ENCODE measurements at regions of chr20 and their contacts with region 1.

Region 1: GRCh38 chr20:63864847-63865640 is at the start of gene TPD52L2:
- DNase-seq: peak; percentile 98
- ATAC-seq: peak; percentile 82
- H3K4me3 ChIP-seq: peak within 1 kb of the TSS; percentile 69 to 97 (median 86)
- H3K4me3 Mint-ChIP-seq: peak within 1 kb of the TSS; percentile 94
- H3K27ac ChIP-seq: peak within 1 kb of the TSS; percentile 89 to 90
- H3K27ac Mint-ChIP-seq: peak within 1 kb of the TSS; percentile 97
- H3K4me1 ChIP-seq: peaks cover 16 to 20% of the 10 kb centered on the region in 2 donors
- H3K4me1 Mint-ChIP-seq: peaks cover 23% of the 10 kb centered on the region
- H3K27me3 ChIP-seq: no peaks in the 10 kb centered on the region
- H3K27me3 Mint-ChIP-seq: no peaks in the 10 kb centered on the region
- CTCF ChIP-seq: no peak
- total RNA-seq, gene TPD52L2: 41.1 and 41.3 TPM in 2 replicates

Region 2: GRCh38 chr20:63520504-63520933 is 344.5 kb before region 1 on chr20 and contains the start of gene PPDPF:
- CTCF ChIA-PET with region 1: no interaction called
- POLR2A ChIA-PET with region 1: interaction called, 4 read pairs
- intact Hi-C with region 1: loop called (anchors 1 kb)
- DNase-seq: peak; percentile 92
- ATAC-seq: peak; percentile 81
- H3K4me3 ChIP-seq: peak within 1 kb of the TSS; percentile 21 to 79 (median 74)
- H3K4me3 Mint-ChIP-seq: peak within 1 kb of the TSS; percentile 86
- H3K27ac ChIP-seq: peak within 1 kb of the TSS; percentile 63 to 76
- H3K27ac Mint-ChIP-seq: peak within 1 kb of the TSS; percentile 90
- H3K4me1 ChIP-seq: peaks cover 16 to 23% of the 10 kb centered on the region in 2 donors
- H3K4me1 Mint-ChIP-seq: peaks cover 31% of the 10 kb centered on the region
- H3K27me3 ChIP-seq: peaks cover 0 to 10% (median 3%) of the 10 kb centered on the region in 4 experiments
- H3K27me3 Mint-ChIP-seq: peaks cover 4% of the 10 kb centered on the region
- CTCF ChIP-seq: no peak
- total RNA-seq, gene PPDPF: 149 and 162 TPM in 2 replicates

Region 3: GRCh38 chr20:63622096-63622495 is 242.9 kb before region 1 on chr20:
- CTCF ChIA-PET with region 1: interaction called, 3 read pairs
- POLR2A ChIA-PET with region 1: interaction called, 12 read pairs
- intact Hi-C with region 1: no loop called
- DNase-seq: no peak
- ATAC-seq: no peak
- H3K4me3 ChIP-seq: no peak overlapping the region
- H3K4me3 Mint-ChIP-seq: no peak overlapping the region
- H3K27ac ChIP-seq: no peak overlapping the region
- H3K27ac Mint-ChIP-seq: no peak overlapping the region
- H3K4me1 ChIP-seq: peaks cover 3 to 13% of the 10 kb centered on the region in 2 donors
- H3K4me1 Mint-ChIP-seq: peaks cover 14% of the 10 kb centered on the region
- H3K27me3 ChIP-seq: no peaks in the 10 kb centered on the region
- H3K27me3 Mint-ChIP-seq: no peaks in the 10 kb centered on the region
- CTCF ChIP-seq: no peak

Region 4: GRCh38 chr20:63707549-63708300 is 157.3 kb before region 1 on chr20 and contains the starts of genes ARFRP1 and ZGPAT:
- CTCF ChIA-PET with region 1: interaction called, 11 read pairs
- POLR2A ChIA-PET with region 1: no interaction called
- intact Hi-C with region 1: loop called (anchors 1 kb)
- DNase-seq: peak; percentile 92
- ATAC-seq: peak; percentile 96
- H3K4me3 ChIP-seq: peak within 1 kb of the TSS in 4 of 5 experiments; percentile 63 to 80 (median 67)
- H3K4me3 Mint-ChIP-seq: peak within 1 kb of the TSS; percentile 87
- H3K27ac ChIP-seq: peak within 1 kb of the TSS; percentile 63 to 85
- H3K27ac Mint-ChIP-seq: peak within 1 kb of the TSS; percentile 86
- H3K4me1 ChIP-seq: peaks cover 21 to 28% of the 10 kb centered on the region in 2 donors
- H3K4me1 Mint-ChIP-seq: peaks cover 38% of the 10 kb centered on the region
- H3K27me3 ChIP-seq: no peaks in the 10 kb centered on the region
- H3K27me3 Mint-ChIP-seq: no peaks in the 10 kb centered on the region
- CTCF ChIP-seq: no peak
- total RNA-seq, gene ARFRP1: 73.3 and 75.5 TPM in 2 replicates
- total RNA-seq, gene ZGPAT: 46.1 and 47.5 TPM in 2 replicates

Region 5: DNA sequence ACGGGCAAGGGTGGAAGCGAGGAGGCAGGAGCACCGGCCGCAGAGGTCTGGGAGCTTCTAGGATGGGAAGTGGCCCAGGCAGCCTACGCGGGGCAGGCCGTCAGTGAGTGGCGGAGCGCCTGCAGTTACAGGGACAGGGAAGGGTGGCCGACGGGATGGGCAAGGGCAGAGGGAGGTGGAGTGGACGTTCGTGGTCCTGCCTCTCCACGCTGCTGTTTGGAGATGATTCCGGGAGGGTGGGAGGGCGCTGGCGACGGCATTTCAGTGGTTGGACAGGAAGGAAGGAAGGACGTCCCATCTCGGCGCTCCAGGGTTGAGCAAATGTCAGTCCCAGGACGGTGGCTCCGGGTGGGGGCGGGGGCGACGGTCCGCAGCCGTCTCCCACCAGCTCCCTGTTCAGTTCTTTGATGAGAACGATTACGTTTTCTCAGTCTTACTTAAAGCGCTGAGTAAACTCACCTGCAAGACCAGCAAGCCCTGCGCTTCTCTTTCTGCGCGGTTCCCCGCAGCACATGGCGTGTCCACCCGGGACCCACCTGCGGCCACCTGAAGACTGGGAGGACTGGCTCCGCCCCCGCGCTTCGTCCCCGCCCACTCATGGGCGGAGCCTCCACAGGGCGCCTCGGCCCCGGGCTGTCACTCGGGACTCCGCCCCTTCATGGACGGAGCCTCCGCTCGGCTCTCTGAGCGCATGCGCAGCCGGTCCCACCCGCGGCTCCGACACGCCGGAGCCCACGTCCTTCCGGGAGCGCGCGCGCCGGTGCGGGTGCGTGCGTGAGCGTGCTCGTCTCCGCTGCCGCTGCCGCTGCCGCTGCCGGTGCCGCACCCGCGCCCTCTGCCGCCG is 29.5 kb after region 1 on chr20 and contains the start of gene DNAJC5:
- CTCF ChIA-PET with region 1: no interaction called
- POLR2A ChIA-PET with region 1: interaction called, 6 read pairs
- intact Hi-C with region 1: loop called (anchors 1 kb)
- DNase-seq: peak; percentile 98
- ATAC-seq: peak; percentile 94
- H3K4me3 ChIP-seq: peak within 1 kb of the TSS; percentile 38 to 81 (median 60)
- H3K4me3 Mint-ChIP-seq: peak within 1 kb of the TSS; percentile 93
- H3K27ac ChIP-seq: peak within 1 kb of the TSS; percentile 42 to 80
- H3K27ac Mint-ChIP-seq: peak within 1 kb of the TSS; percentile 91
- H3K4me1 ChIP-seq: peaks cover 16 to 36% of the 10 kb centered on the region in 2 donors
- H3K4me1 Mint-ChIP-seq: peaks cover 37% of the 10 kb centered on the region
- H3K27me3 ChIP-seq: no peaks in the 10 kb centered on the region
- H3K27me3 Mint-ChIP-seq: no peaks in the 10 kb centered on the region
- CTCF ChIP-seq: no peak
- total RNA-seq, gene DNAJC5: 32.6 and 33.3 TPM in 2 replicates

Region 6: GRCh38 chr20:63942250-63942959 is 77.4 kb after region 1 on chr20:
- CTCF ChIA-PET with region 1: no interaction called
- POLR2A ChIA-PET with region 1: no interaction called
- intact Hi-C with region 1: no loop called
- DNase-seq: peak; percentile 38
- ATAC-seq: no peak
- H3K4me3 ChIP-seq: no peak overlapping the region
- H3K4me3 Mint-ChIP-seq: no peak overlapping the region
- H3K27ac ChIP-seq: peak overlapping the region in 1 of 2 donors; percentile 1
- H3K27ac Mint-ChIP-seq: peak overlapping the region; percentile 41
- H3K4me1 ChIP-seq: peaks cover 14 to 21% of the 10 kb centered on the region in 2 donors
- H3K4me1 Mint-ChIP-seq: peaks cover 23% of the 10 kb centered on the region
- H3K27me3 ChIP-seq: no peaks in the 10 kb centered on the region
- H3K27me3 Mint-ChIP-seq: no peaks in the 10 kb centered on the region
- CTCF ChIP-seq: no peak

Region 7: GRCh38 chr20:63980806-63981728 is 116.0 kb after region 1 on chr20 and contains the start of gene PRPF6:
- CTCF ChIA-PET with region 1: interaction called, 9 read pairs
- POLR2A ChIA-PET with region 1: interaction called, 12 read pairs
- intact Hi-C with region 1: loop called (anchors 1 kb)
- DNase-seq: peak; percentile 96
- ATAC-seq: peak; percentile 72
- H3K4me3 ChIP-seq: peak within 1 kb of the TSS; percentile 63 to 85 (median 79)
- H3K4me3 Mint-ChIP-seq: peak within 1 kb of the TSS; percentile 90
- H3K27ac ChIP-seq: peak within 1 kb of the TSS; percentile 69 to 87
- H3K27ac Mint-ChIP-seq: peak within 1 kb of the TSS; percentile 94
- H3K4me1 ChIP-seq: peaks cover 30 to 46% of the 10 kb centered on the region in 2 donors
- H3K4me1 Mint-ChIP-seq: peaks cover 53% of the 10 kb centered on the region
- H3K27me3 ChIP-seq: no peaks in the 10 kb centered on the region
- H3K27me3 Mint-ChIP-seq: no peaks in the 10 kb centered on the region
- CTCF ChIP-seq: peak; percentile 86
- total RNA-seq, gene PRPF6: 79.7 and 82.9 TPM in 2 replicates

Region 8: DNA sequence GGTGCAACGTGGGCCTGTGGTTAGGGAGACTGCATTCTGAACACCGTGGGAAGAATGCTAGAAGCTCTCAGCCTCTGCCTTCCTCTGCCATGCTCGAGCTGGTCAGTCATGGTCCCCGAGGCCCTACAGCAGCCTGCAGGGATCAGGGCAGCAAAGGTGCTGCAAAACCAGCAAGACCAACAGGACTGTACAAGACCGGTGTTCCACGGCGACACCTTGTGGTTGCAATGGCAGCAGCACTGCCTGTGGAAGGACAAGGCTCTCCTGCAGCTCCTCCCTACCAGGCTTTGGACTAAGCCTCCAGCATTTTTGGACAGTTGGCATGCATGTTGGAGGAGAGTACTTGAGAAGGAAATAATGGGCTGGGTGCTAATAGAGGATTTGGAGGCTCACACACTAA is 280.4 kb after region 1 on chr20:
- CTCF ChIA-PET with region 1: no interaction called
- POLR2A ChIA-PET with region 1: no interaction called
- intact Hi-C with region 1: no loop called
- DNase-seq: no peak
- ATAC-seq: no peak
- H3K4me3 ChIP-seq: no peak overlapping the region
- H3K4me3 Mint-ChIP-seq: no peak overlapping the region
- H3K27ac ChIP-seq: no peak overlapping the region
- H3K27ac Mint-ChIP-seq: no peak overlapping the region
- H3K4me1 ChIP-seq: no peaks in the 10 kb centered on the region
- H3K4me1 Mint-ChIP-seq: no peaks in the 10 kb centered on the region
- H3K27me3 ChIP-seq: peaks cover 0 to 16% (median 0%) of the 10 kb centered on the region in 4 experiments
- H3K27me3 Mint-ChIP-seq: peaks cover 9% of the 10 kb centered on the region
- CTCF ChIP-seq: no peak